MCF 10A (cell line): ENCODE measurements at regions of chr1 and their contacts with region 1.

Region 1: DNA sequence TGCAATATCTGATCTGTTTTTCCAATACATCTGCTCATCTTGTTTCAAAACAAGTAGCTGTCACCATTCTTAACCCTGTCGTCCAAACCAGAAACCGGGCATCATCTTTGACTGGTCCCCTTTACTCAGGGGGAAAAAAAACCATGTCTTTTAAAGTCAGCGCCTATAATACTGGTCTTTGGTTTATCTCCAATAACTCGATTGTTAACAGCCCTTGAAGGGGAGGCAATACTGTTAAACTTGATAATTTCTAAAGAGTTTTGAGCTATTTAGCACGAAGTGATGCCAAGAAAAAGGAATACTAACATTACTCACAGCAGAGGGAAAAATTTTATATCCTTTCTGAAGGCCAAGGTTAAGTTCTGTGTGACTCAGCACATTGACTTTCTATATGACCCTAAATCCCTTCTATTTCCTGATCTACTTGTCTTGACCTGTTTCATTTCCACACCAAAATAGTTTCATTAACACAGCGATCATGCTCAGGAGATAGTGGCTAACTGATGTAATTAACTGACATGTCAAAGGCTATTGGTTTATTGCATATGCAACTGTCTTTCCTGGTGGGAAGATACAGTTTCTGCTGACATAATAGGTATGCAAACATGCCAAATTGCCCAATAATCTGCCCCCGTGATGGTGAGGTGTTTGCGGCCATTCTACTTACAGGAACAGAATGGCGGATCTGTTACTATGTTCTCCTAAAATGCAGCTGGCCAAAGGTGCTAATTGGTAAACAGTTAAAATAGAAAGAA is 59.1 kb downstream of the NFIA start:
- DNase-seq: peak; percentile 96
- H3K4me3 Mint-ChIP-seq: peak overlapping the region; percentile 40
- H3K27ac Mint-ChIP-seq: peak overlapping the region; percentile 85
- H3K4me1 Mint-ChIP-seq: peaks cover 41% of the 10 kb centered on the region
- H3K27me3 Mint-ChIP-seq: no peaks in the 10 kb centered on the region
- CTCF ChIP-seq: no peak

Region 2: GRCh38 chr1:61056573-61057439 is 84.7 kb before region 1 on chr1:
- CTCF ChIA-PET with region 1: interaction called, 4 read pairs
- POLR2A ChIA-PET with region 1: interaction called, 14 read pairs
- intact Hi-C with region 1: loop called (anchors 5 kb)
- DNase-seq: peak; percentile 63
- H3K4me3 Mint-ChIP-seq: peak overlapping the region; percentile 86
- H3K27ac Mint-ChIP-seq: peak overlapping the region; percentile 73
- H3K4me1 Mint-ChIP-seq: peaks cover 14% of the 10 kb centered on the region
- H3K27me3 Mint-ChIP-seq: no peaks in the 10 kb centered on the region
- CTCF ChIP-seq: no peak

Region 3: GRCh38 chr1:61097317-61097716 is 44.1 kb before region 1 on chr1:
- CTCF ChIA-PET with region 1: no interaction called
- POLR2A ChIA-PET with region 1: interaction called, 23 read pairs
- intact Hi-C with region 1: no loop called
- DNase-seq: peak; percentile 55
- H3K4me3 Mint-ChIP-seq: no peak overlapping the region
- H3K27ac Mint-ChIP-seq: no peak overlapping the region
- H3K4me1 Mint-ChIP-seq: peaks cover 55% of the 10 kb centered on the region
- H3K27me3 Mint-ChIP-seq: no peaks in the 10 kb centered on the region
- CTCF ChIP-seq: no peak

Region 4: GRCh38 chr1:61157468-61157987 is 16.1 kb after region 1 on chr1:
- CTCF ChIA-PET with region 1: interaction called, 5 read pairs
- POLR2A ChIA-PET with region 1: interaction called, 23 read pairs
- intact Hi-C with region 1: no loop called
- DNase-seq: no peak
- H3K4me3 Mint-ChIP-seq: no peak overlapping the region
- H3K27ac Mint-ChIP-seq: peak overlapping the region; percentile 52
- H3K4me1 Mint-ChIP-seq: peaks cover 8% of the 10 kb centered on the region
- H3K27me3 Mint-ChIP-seq: no peaks in the 10 kb centered on the region
- CTCF ChIP-seq: no peak

Region 5: DNA sequence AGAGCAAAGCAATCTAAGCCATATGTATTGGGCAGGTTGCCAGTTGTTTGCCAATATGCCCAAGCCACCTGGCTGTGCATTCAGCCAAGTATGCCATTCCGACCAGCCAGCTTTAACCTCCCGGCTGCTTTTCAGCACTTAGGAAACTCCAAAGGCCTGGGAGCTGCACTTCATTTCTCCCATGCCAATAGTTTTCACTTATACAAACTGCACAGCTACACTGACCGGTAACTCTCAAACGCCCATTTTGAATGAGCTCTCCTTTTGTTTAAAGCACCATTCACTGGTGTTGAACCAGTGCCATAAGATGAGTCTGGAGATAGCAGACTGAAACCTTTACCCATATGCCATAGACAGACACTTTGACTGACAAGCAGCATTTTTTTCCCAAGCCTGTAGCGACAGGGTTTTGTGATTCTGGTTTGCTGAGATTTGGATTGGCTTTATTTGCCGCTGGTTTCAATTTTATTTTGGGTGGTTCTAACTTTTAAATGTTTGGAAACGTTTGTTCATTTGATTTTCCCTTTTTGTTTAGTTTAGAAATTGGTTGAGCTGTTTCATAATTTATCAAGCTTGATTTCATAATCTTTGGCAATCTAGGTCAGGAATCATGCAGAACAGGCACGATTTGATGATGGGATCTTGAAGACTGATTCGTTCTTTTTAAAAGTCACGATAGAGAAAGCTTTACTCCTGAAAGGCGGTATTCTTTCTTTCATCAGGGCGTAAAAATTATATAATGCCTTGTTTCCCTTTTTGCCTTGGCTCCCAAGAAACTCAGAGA is 85.5 kb after region 1 on chr1:
- CTCF ChIA-PET with region 1: interaction called, 3 read pairs
- POLR2A ChIA-PET with region 1: interaction called, 12 read pairs
- intact Hi-C with region 1: no loop called
- DNase-seq: peak; percentile 95
- H3K4me3 Mint-ChIP-seq: peak overlapping the region; percentile 56
- H3K27ac Mint-ChIP-seq: peak overlapping the region; percentile 49
- H3K4me1 Mint-ChIP-seq: peaks cover 29% of the 10 kb centered on the region
- H3K27me3 Mint-ChIP-seq: no peaks in the 10 kb centered on the region
- CTCF ChIP-seq: no peak

Region 6: DNA sequence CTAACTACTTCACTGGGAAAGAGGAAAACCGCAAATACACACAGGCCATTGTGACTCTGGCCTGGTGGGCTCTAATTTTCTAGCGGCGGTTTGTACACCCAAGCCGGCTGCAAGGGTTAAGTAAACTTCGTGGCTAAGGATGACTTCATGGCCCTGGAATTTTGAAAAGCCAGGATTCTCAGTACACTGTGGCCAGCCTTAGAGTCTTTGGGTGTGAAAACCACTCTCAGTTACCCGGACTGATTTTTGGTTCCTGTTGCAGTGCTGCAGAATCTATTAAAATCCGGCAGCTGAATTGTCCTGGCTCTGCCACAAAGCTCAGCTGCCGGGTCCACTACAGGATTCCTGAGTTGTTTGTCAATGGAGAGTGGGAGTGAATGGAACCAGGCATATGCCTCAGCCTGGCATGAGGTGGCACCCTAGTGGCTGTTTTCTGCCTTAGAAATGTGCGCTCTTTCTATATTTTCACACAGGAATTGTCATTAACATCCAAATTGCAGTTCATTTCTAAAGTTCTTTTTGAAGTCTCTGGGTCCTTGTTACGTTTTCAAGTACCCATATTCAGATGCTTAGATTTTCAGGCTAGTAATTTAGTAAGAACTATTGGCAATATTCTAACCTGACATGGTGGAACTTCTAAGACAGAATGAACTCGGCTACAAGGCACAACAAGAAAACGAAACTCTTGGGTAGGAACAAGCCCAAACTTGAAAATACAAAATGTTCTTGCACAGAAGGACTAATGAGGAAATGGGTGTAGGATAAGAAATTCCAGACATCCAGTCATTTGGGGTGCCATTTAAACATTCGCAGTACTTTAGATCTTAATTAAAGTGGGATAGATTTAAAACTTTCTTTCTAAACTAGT is 196.8 kb after region 1 on chr1:
- CTCF ChIA-PET with region 1: interaction called, 11 read pairs
- POLR2A ChIA-PET with region 1: interaction called, 39 read pairs
- intact Hi-C with region 1: loop called (anchors 1 kb)
- DNase-seq: peak; percentile 91
- H3K4me3 Mint-ChIP-seq: peak overlapping the region; percentile 70
- H3K27ac Mint-ChIP-seq: peak overlapping the region; percentile 96
- H3K4me1 Mint-ChIP-seq: peaks cover 28% of the 10 kb centered on the region
- H3K27me3 Mint-ChIP-seq: no peaks in the 10 kb centered on the region
- CTCF ChIP-seq: peak; percentile 81